ENCODE measurements at regions of chr18 and their contacts with region 1.

Region 1: GRCh38 chr18:32552421-32553030 is 81.8 kb upstream of the GAREM1 start:
- DNase-seq: peak; percentile 81
- H3K4me3 Mint-ChIP-seq: no peak overlapping the region
- H3K27ac Mint-ChIP-seq: no peak overlapping the region
- H3K4me1 Mint-ChIP-seq: peaks cover 6% of the 10 kb centered on the region
- H3K27me3 Mint-ChIP-seq: no peaks in the 10 kb centered on the region
- CTCF ChIP-seq: peak; percentile 57

Region 2: DNA sequence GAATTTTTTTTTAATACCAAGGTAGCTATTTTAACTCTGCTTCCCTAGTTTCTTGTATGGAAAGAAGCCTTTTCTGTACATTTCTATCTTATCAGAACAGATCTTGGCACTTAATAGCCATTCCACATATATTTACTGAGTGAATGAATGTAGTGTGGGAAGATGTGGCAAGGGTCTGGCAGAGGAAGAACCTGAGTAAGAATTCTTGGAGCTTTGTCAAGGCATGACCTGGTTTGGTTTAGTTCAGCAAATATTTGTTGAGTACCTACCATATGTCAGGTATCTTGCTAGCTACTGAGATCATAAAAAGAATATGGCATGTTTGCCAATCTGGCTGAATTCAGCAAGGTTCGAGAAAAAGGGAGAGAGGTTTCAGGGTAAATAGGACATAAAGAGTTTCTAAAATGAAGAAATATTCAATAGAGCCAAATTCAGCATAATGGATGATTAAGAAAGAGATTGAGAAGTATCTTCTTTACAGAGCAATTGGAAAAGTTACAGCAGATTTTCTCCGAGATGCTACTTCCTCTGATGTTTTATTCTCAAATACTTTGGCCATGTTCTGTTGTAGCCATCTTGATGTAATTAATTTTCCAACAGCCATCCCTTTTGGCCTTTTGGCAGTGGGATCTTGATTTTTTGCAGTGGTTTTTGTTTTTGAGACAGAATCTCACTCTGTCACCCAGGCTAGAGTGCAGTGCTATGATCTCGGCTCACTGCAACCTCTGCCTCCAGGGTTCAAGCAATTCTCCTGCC is 384.4 kb before region 1 on chr18:
- CTCF ChIA-PET with region 1: interaction called, 45 read pairs
- POLR2A ChIA-PET with region 1: no interaction called
- intact Hi-C with region 1: no loop called
- DNase-seq: peak; percentile 35
- H3K4me3 Mint-ChIP-seq: no peak overlapping the region
- H3K27ac Mint-ChIP-seq: peak overlapping the region; percentile 14
- H3K4me1 Mint-ChIP-seq: peaks cover 6% of the 10 kb centered on the region
- H3K27me3 Mint-ChIP-seq: no peaks in the 10 kb centered on the region
- CTCF ChIP-seq: no peak

Region 3: GRCh38 chr18:32289483-32290075 is 262.9 kb before region 1 on chr18:
- CTCF ChIA-PET with region 1: interaction called, 15 read pairs
- POLR2A ChIA-PET with region 1: interaction called, 3 read pairs
- intact Hi-C with region 1: loop called (anchors 1 kb)
- DNase-seq: peak; percentile 82
- H3K4me3 Mint-ChIP-seq: no peak overlapping the region
- H3K27ac Mint-ChIP-seq: no peak overlapping the region
- H3K4me1 Mint-ChIP-seq: peaks cover 26% of the 10 kb centered on the region
- H3K27me3 Mint-ChIP-seq: no peaks in the 10 kb centered on the region
- CTCF ChIP-seq: peak; percentile 59

Region 4: GRCh38 chr18:32542221-32542798 is 10.2 kb before region 1 on chr18:
- CTCF ChIA-PET with region 1: interaction called, 11 read pairs
- POLR2A ChIA-PET with region 1: interaction called, 5 read pairs
- intact Hi-C with region 1: no loop called
- DNase-seq: peak; percentile 93
- H3K4me3 Mint-ChIP-seq: peak overlapping the region; percentile 62
- H3K27ac Mint-ChIP-seq: peak overlapping the region; percentile 17
- H3K4me1 Mint-ChIP-seq: peaks cover 29% of the 10 kb centered on the region
- H3K27me3 Mint-ChIP-seq: no peaks in the 10 kb centered on the region
- CTCF ChIP-seq: no peak